ENCODE measurements at regions of chr17 and their contacts with region 1.

Region 1: DNA sequence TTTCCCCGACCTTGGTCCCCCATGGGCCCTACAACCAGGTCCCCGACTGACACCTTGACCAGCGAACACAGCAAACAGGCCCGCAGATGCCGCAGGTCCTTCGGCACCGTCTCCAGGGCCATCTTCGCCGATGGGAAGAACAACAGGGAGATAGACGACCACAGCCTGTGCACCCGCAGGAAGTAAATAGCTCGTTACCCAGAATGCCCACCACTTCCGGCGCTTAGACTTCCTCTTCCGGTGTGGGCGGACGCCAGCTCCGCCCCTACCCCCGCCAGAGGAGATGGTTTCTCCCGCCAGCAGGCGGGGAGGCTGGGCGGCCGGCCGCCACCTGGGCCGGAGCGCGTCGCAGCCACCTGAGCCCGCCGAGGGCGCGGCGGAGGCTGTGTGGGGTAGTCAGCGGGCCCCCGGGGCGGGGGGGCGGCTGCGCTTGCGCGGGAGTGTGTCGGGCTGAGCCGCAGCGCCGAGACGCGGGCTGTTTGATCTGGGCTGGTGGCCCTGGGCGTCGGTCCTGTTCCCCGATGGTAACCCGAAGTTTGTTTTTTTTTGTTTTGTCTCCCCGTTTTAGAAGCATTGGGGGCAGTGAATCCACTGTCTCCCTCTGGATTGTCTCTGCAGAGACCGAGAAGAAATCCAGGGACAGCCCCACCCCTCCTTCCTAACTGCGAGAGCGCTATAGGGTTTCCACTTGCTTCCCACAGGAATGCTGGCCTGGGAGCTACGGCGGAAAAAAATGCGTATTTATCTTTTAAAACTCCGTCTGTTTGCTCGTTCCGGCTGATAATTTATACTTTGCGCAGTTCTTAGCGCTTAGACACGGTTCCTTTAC is at the start of gene SUPT4H1:
- DNase-seq: peak; percentile 90
- H3K4me3 Mint-ChIP-seq: peak within 1 kb of the TSS; percentile 100
- H3K27ac Mint-ChIP-seq: peak within 1 kb of the TSS; percentile 96
- H3K4me1 Mint-ChIP-seq: peaks cover 57% of the 10 kb centered on the region
- H3K27me3 Mint-ChIP-seq: no peaks in the 10 kb centered on the region
- total RNA-seq, gene SUPT4H1: 138 and 142 TPM in 2 replicates

Region 2: GRCh38 chr17:57849874-57850754 is 502.1 kb before region 1 on chr17 and contains the start of gene MRPS23:
- intact Hi-C with region 1: loop called (anchors 5 kb)
- DNase-seq: peak; percentile 96
- H3K4me3 Mint-ChIP-seq: peak within 1 kb of the TSS; percentile 99
- H3K27ac Mint-ChIP-seq: peak within 1 kb of the TSS; percentile 99
- H3K4me1 Mint-ChIP-seq: peaks cover 18% of the 10 kb centered on the region
- H3K27me3 Mint-ChIP-seq: no peaks in the 10 kb centered on the region
- total RNA-seq, gene MRPS23: 79.6 and 87.0 TPM in 2 replicates

Region 3: GRCh38 chr17:58219001-58219788 is 133.0 kb before region 1 on chr17 and contains the start of gene MKS1:
- intact Hi-C with region 1: loop called (anchors 2 kb)
- DNase-seq: peak; percentile 94
- H3K4me3 Mint-ChIP-seq: peak within 1 kb of the TSS; percentile 92
- H3K27ac Mint-ChIP-seq: peak within 1 kb of the TSS; percentile 96
- H3K4me1 Mint-ChIP-seq: peaks cover 26% of the 10 kb centered on the region
- H3K27me3 Mint-ChIP-seq: peaks cover 11% of the 10 kb centered on the region
- total RNA-seq, gene MKS1: 18.8 and 23.3 TPM in 2 replicates

Region 4: GRCh38 chr17:58317421-58318064 is 34.7 kb before region 1 on chr17:
- intact Hi-C with region 1: loop called (anchors 1 kb)
- DNase-seq: peak; percentile 55
- H3K4me3 Mint-ChIP-seq: no peak overlapping the region
- H3K27ac Mint-ChIP-seq: peak overlapping the region; percentile 87
- H3K4me1 Mint-ChIP-seq: peaks cover 28% of the 10 kb centered on the region
- H3K27me3 Mint-ChIP-seq: no peaks in the 10 kb centered on the region

Region 5: DNA sequence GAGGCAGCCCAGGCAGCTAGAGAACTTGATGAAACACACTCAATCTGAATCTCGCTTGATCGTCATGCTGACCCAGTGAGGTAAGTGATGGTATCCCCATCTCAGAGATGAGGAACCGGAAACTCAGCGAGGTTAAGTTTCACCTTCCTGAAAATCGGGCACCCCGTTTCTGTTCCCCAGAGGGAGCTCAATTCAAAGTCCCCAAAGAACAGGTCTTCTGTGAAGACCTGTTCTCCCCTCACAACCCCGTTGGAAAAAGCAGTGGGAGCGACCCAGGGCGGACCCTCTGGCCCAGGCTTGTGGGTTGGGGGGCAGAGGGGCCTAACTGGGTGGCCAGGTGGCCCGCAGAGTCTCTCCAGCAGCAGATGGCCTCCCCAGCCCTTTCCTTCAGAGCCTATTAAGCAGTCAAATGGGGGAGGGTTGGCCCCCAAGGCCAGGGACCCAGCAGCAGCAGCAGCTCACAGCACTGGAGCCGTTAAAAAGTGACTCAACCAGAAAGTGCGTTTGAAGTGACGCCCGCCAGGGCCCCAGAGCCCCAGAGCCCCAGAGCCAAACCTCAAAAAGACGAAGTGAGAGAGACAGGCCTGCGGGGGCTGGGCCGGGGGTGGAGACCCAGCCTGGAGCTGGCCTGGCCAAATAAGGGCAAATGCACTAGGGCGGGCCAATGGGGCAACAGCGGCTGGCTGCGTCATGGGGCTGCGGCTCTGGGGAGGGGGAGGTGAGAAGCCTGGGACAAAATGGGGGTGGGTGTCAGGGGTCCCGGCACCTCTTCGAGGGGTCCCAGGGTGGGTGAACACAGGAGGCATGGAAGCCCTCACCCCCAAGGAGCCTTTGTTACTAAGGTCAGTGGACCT is 14.4 kb before region 1 on chr17:
- intact Hi-C with region 1: loop called (anchors 1 kb)
- DNase-seq: peak; percentile 92
- H3K4me3 Mint-ChIP-seq: peak overlapping the region; percentile 100
- H3K27ac Mint-ChIP-seq: peak overlapping the region; percentile 99
- H3K4me1 Mint-ChIP-seq: peaks cover 61% of the 10 kb centered on the region
- H3K27me3 Mint-ChIP-seq: peaks cover 2% of the 10 kb centered on the region

Region 6: DNA sequence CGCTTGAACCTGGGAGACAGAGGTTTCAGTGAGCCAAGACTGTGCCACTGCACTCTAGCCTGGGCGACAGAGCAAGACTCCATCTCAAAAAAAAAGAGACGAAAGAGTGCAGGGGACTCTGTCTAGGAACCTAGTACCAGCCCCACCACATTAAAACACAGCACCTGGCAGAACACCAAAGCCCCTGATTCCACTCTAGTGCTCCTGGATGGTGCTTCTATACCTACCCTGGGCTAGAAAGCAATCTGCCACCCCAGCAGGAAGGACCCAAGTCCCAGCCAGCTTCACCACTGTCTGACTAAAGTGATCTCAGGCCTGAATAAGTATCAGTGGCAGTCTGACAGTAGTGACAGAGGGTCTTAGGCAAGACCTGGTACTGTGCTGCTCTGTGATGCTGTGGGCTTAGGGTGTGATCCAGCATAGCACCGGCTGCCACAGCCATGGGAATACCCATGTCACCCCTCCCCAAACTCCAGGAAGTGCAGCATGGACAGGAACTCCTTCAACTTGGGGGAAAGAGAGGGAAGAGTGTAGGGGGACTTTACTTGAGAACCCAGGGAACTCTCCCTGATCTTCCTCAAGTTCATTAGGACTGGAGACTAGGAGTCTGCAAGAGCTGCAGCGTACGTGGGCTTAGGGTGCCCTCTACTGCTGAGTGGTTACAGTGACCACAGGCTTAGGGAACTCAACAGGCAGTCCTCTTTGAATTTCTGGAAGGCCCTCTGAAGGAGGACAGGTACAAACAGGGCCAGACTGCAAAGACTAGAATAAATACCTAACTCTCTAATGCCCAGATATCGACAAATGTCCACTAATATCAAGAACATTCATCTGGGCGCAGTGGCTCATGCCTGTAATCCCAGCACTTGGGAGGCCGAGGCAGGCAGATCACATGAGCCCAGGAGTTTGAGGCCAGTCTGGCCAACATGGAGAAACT is 95.1 kb after region 1 on chr17:
- intact Hi-C with region 1: loop called (anchors 1 kb)
- DNase-seq: peak; percentile 58
- H3K4me3 Mint-ChIP-seq: no peak overlapping the region
- H3K27ac Mint-ChIP-seq: no peak overlapping the region
- H3K4me1 Mint-ChIP-seq: peaks cover 5% of the 10 kb centered on the region
- H3K27me3 Mint-ChIP-seq: peaks cover under 1% of the 10 kb centered on the region